ENCODE measurements at regions of chr1 and their contacts with region 1.

Region 1: DNA sequence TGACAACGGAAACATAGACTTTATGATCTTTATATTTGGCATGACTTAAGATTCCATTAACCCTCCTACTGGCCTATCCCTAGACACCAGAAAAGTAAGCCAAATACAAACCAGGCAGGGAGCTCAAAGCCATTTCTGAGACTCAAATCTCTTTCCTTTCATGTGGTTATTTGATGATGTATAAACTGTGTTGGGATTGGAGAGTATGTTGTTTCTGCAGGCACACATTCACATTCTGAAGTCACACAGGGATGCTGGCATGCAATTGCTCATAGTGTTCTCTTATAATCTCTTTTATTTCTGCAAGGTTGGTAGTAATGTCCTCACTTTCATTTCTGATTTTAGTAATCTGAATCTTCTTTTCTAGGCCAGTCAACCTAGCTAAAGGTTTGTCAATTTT is 5.8 kb downstream of the ZMYND12 start:
- DNase-seq: no peak
- ATAC-seq: no peak
- H3K4me3 ChIP-seq: no peak overlapping the region
- H3K27ac ChIP-seq: no peak overlapping the region
- H3K4me1 ChIP-seq: no peaks in the 10 kb centered on the region
- H3K27me3 ChIP-seq: no peaks in the 10 kb centered on the region
- CTCF ChIP-seq: no peak

Region 2: GRCh38 chr1:42358791-42359190 is 91.3 kb before region 1 on chr1:
- CTCF ChIA-PET with region 1: no interaction called
- POLR2A ChIA-PET with region 1: interaction called, 10 read pairs
- in situ Hi-C with region 1: no loop called
- intact Hi-C with region 1: no loop called
- DNase-seq: no peak
- ATAC-seq: no peak
- H3K4me3 ChIP-seq: no peak overlapping the region
- H3K27ac ChIP-seq: no peak overlapping the region
- H3K4me1 ChIP-seq: no peaks in the 10 kb centered on the region
- H3K27me3 ChIP-seq: no peaks in the 10 kb centered on the region; the same call in 1 of the 2 replicates
- CTCF ChIP-seq: no peak

Region 3: GRCh38 chr1:42380586-42381279 is 69.3 kb before region 1 on chr1 and contains the start of gene RIMKLA:
- CTCF ChIA-PET with region 1: no interaction called
- POLR2A ChIA-PET with region 1: no interaction called
- in situ Hi-C with region 1: no loop called
- intact Hi-C with region 1: no loop called
- DNase-seq: no peak
- ATAC-seq: peak; percentile 99
- H3K4me3 ChIP-seq: peak within 1 kb of the TSS; percentile 58 to 62
- H3K27ac ChIP-seq: peak within 1 kb of the TSS; percentile 52; the same call in 1 of the 2 replicates
- H3K4me1 ChIP-seq: peaks cover 11% of the 10 kb centered on the region
- H3K27me3 ChIP-seq: 0 out of 2 replicates have a peak, but pooled peaks cover 2% of the 10 kb centered on the region
- CTCF ChIP-seq: no peak
- total RNA-seq, gene RIMKLA: 13.6 TPM

Measured in Panc1 (cell line).